Mammary epithelial cell (primary cell): ENCODE measurements at regions of chr5 and their contacts with region 1.

Region 1: DNA sequence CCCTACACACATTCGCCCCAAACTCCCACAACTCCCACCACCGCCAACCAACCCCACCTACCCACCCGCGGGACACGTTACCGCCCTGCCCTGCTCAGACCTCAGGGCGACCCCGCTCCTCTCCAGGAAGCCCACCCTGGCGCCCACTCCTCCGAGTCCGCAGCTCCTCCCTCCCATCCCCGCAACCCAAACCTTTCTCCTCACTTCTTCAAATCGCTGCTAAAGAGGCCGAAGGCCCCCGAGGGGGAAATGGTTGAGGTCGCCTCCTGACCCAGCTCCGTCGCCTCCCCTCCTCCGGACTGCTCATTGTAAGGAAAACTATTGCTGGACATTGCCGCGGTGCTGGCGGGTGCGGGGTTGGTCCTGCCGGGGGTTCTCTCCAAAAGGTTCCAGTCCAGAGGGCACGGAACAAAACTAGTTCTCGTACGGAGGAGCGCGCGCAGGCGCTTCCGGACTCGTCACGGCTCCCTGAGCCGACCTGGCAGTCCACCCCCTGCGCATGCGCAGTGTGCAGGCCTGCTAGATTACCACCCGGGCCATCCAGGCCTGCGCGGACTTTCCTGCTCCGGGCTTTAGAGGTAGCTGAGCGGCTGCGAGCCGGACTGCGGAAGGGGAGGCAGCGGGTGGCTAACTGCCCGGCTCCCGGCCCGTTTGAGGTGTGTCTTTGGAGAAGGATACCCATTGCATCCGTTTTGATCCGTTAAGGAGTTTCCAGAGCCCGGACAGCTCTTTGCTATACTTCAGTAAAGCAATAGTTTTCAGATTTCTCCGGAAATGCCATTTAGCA is at the start of gene AP3B1:
- DNase-seq: peak; percentile 99
- H3K4me3 ChIP-seq: peak within 1 kb of the TSS; percentile 90 to 99 (median 91)
- H3K27ac ChIP-seq: peak within 1 kb of the TSS; percentile 82
- H3K4me1 ChIP-seq: peaks cover 4% of the 10 kb centered on the region
- H3K27me3 ChIP-seq: no peaks in the 10 kb centered on the region
- CTCF ChIP-seq: no peak
- total RNA-seq, gene AP3B1: 53.2 to 55.0 TPM

Region 2: DNA sequence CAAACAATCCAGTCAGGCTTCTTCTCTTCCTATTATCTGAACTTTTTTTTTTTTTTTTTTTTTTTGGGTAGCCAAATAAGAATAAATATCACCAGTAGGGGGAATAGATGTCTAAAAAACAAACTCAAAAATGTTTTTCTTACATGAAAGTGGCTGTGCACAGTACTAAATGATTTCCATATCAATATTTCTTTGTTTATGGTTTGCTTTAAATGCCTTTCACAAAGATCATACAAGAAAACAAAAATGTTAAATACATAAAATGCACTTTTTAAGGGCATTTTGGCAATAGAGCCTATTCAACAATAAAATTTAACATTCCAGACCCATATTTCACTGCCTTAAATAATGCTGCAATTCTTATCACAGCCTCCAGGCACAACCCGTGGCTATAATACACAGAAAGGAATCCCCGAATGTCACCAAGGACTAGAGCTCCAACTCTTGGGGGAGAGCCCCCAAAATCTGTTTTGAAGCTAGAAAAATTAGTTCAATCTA is 427.2 kb before region 1 on chr5:
- CTCF ChIA-PET with region 1: no interaction called
- dilution Hi-C with region 1: no loop called
- in situ Hi-C with region 1: no loop called
- intact Hi-C with region 1: loop called (anchors 2 kb)
- DNase-seq: no peak
- H3K4me3 ChIP-seq: no peak overlapping the region
- H3K27ac ChIP-seq: no peak overlapping the region
- H3K4me1 ChIP-seq: no peaks in the 10 kb centered on the region
- H3K27me3 ChIP-seq: no peaks in the 10 kb centered on the region
- CTCF ChIP-seq: peak in 1 of 2 donors; percentile 17

Region 3: GRCh38 chr5:78269088-78269703 is 25.2 kb before region 1 on chr5:
- CTCF ChIA-PET with region 1: no interaction called
- dilution Hi-C with region 1: no loop called
- in situ Hi-C with region 1: no loop called
- intact Hi-C with region 1: loop called (anchors 2 kb)
- DNase-seq: no peak
- H3K4me3 ChIP-seq: no peak overlapping the region
- H3K27ac ChIP-seq: no peak overlapping the region
- H3K4me1 ChIP-seq: no peaks in the 10 kb centered on the region
- H3K27me3 ChIP-seq: no peaks in the 10 kb centered on the region
- CTCF ChIP-seq: peak; percentile 41 to 45

Region 4: GRCh38 chr5:78339617-78340436 is 45.4 kb after region 1 on chr5:
- CTCF ChIA-PET with region 1: no interaction called
- dilution Hi-C with region 1: no loop called
- in situ Hi-C with region 1: no loop called
- intact Hi-C with region 1: loop called (anchors 5 kb)
- DNase-seq: no peak
- H3K4me3 ChIP-seq: no peak overlapping the region
- H3K27ac ChIP-seq: no peak overlapping the region
- H3K4me1 ChIP-seq: no peaks in the 10 kb centered on the region
- H3K27me3 ChIP-seq: no peaks in the 10 kb centered on the region
- CTCF ChIP-seq: no peak

Region 5: GRCh38 chr5:78359831-78360673 is 65.6 kb after region 1 on chr5 and contains the start of gene SCAMP1:
- CTCF ChIA-PET with region 1: no interaction called
- dilution Hi-C with region 1: no loop called
- in situ Hi-C with region 1: loop called in 1 of 2 experiments (anchors 10 kb)
- intact Hi-C with region 1: loop called (anchors 1 kb)
- DNase-seq: peak; percentile 94
- H3K4me3 ChIP-seq: peak within 1 kb of the TSS; percentile 95 to 100 (median 96)
- H3K27ac ChIP-seq: peak within 1 kb of the TSS; percentile 76
- H3K4me1 ChIP-seq: no peaks in the 10 kb centered on the region
- H3K27me3 ChIP-seq: no peaks in the 10 kb centered on the region
- CTCF ChIP-seq: peak; percentile 5 to 42
- total RNA-seq, gene SCAMP1: 48.8 to 126 TPM

Region 6: DNA sequence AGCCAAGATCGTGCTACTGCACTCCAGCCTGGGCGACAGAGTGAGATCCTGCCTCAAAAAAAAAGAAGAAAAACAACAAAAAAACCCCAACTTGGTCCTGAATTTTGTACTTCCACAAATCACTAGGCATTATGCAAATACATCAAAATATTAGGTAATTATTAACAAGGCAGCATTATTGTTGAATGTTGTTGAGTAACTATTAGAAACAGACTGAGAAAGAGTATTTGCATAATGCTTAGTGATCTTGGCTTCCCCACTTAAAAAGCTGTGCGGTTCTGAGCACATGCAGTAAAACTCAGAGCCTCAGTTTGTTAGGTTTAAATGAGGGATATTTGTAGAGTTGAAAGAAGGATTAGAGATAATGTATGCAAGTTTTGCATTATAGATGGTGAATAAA is 130.2 kb after region 1 on chr5:
- CTCF ChIA-PET with region 1: no interaction called
- dilution Hi-C with region 1: no loop called
- in situ Hi-C with region 1: no loop called
- intact Hi-C with region 1: no loop called
- DNase-seq: no peak
- H3K4me3 ChIP-seq: no peak overlapping the region
- H3K27ac ChIP-seq: no peak overlapping the region
- H3K4me1 ChIP-seq: no peaks in the 10 kb centered on the region
- H3K27me3 ChIP-seq: no peaks in the 10 kb centered on the region
- CTCF ChIP-seq: no peak

Region 7: DNA sequence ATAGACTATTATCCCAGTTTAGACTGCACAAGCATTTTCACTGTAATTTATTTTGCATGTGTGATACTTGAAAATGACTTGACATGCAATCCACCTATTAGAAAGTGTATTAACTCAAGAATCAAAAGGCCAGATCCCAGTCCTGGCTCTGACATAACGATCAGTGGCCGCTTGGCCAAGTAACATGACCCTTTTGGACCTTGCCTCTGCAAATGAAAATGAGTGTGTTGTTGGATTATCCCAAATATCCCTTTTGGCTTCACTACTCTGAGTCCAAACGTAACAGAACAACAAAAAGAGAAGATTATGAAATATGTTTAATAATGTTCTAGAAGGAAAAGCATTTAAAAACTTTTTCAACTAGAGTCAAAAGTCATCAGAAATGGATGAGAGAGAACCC is 756.1 kb after region 1 on chr5:
- CTCF ChIA-PET with region 1: no interaction called
- dilution Hi-C with region 1: no loop called
- in situ Hi-C with region 1: no loop called
- intact Hi-C with region 1: no loop called
- DNase-seq: no peak
- H3K4me3 ChIP-seq: no peak overlapping the region
- H3K27ac ChIP-seq: no peak overlapping the region
- H3K4me1 ChIP-seq: no peaks in the 10 kb centered on the region
- H3K27me3 ChIP-seq: no peaks in the 10 kb centered on the region
- CTCF ChIP-seq: no peak